ENCODE measurements at regions of chr20 and their contacts with region 1.

Region 1: DNA sequence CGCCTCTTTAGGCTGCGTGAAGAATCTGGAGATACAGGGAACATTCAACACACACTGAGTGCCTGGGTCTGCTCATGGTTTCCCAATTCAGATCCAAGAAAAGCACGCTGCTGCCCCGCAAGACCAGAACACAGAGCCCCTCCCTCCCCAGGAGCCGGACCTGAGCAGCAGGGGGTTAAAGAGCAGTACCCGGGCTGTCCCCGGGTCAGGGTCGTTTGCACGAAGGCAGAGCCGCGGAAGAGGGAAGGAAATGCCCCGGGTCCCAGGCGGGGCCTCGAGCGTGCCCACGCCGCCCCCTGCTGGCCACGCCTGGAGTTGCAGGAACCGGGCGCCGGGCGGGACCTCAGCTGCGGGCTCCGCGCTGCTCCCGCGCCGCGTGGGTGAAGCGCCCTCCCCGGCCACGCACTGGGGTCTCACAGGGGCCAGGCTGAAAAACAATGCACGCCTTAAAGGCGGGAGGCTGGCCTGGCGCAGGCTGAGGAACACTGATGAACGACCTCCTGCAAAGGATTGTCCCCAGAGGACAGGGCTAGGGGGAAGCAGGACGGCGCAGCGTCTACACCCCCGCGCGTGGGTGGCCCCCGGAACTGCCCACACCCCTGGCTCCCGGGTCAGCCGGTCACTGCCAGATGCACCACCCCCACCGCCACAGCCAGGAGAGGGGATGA is 48.9 kb downstream of the ANKRD60 start:
- DNase-seq: peak; percentile 39 to 82 (median 60)
- ATAC-seq: peak; percentile 12 to 82 (median 70)
- H3K4me3 ChIP-seq: peak overlapping the region in 9 of 12 donors; percentile 13 to 49 (median 27)
- H3K27ac ChIP-seq: peak overlapping the region in 1 of 12 donors; percentile 7
- H3K4me1 ChIP-seq: peaks cover 0 to 22% (median 11%) of the 10 kb centered on the region in 12 donors
- H3K27me3 ChIP-seq: peaks cover 0 to 16% (median 2%) of the 10 kb centered on the region in 9 donors
- CTCF ChIP-seq: peak; percentile 97 to 100 (median 99)
- POLR2A ChIP-seq: no peak

Region 2: DNA sequence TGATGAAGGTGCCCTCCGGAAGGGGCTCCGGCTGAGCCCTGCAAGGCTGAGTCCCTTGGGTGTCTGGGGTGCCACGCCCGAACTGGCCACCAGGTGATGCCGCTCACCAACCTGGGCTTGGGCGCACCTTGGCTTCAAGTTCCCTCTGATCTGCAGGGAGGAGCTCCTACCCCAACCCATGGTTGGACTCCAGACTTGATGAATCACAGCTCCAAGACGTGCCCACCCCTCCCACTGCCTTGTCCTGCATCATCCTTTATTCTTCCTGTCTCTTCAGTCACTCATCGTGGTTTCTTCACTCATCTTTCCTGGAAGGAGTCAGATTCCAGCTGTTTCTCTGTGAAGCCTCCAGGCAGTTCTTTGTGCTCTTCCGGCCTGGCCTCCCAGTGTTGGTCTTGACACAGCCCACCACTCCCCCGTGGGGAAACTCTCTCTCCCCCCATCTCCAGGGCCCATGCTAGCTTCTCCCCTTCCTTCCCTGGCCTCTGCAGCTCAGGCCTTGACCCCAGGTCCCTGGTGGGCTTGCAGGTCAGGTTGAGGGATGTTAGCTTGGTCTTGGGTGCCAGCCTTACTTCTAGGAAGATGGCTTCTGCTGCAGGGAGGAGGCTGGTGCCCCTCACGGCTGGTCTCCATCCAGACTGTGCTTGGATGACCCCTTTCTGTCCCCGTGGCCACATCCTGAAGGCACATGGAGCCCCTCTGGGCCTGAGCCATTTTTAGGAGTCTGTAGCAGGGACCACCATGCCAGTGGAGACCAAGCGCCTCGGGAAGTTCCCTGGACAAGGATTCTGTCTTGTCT is 556.8 kb before region 1 on chr20:
- intact Hi-C with region 1: loop called in 1 of 10 experiments (anchors 10 kb)
- DNase-seq: peak in 1 of 5 donors; percentile 43
- ATAC-seq: peak in 2 of 4 donors; percentile 69 to 74
- H3K4me3 ChIP-seq: no peak overlapping the region
- H3K27ac ChIP-seq: no peak overlapping the region
- H3K4me1 ChIP-seq: peaks cover 0 to 50% (median 7%) of the 10 kb centered on the region in 12 donors
- H3K27me3 ChIP-seq: peaks cover 0 to 15% (median 0%) of the 10 kb centered on the region in 9 donors
- CTCF ChIP-seq: peak; percentile 42 to 67 (median 61)
- POLR2A ChIP-seq: no peak

Region 3: GRCh38 chr20:57748601-57749130 is 430.9 kb before region 1 on chr20:
- intact Hi-C with region 1: loop called in 1 of 10 experiments (anchors 10 kb)
- DNase-seq: peak; percentile 86 to 93 (median 88)
- ATAC-seq: peak; percentile 82 to 92 (median 88)
- H3K4me3 ChIP-seq: peak overlapping the region in 10 of 12 donors; percentile 6 to 49 (median 42)
- H3K27ac ChIP-seq: peak overlapping the region; percentile 1 to 92 (median 84)
- H3K4me1 ChIP-seq: peaks cover 9 to 34% (median 29%) of the 10 kb centered on the region in 12 donors
- H3K27me3 ChIP-seq: no peaks in the 10 kb centered on the region
- CTCF ChIP-seq: peak in 1 of 12 donors; percentile 30
- POLR2A ChIP-seq: no peak

Region 4: GRCh38 chr20:57856658-57857057 is 322.9 kb before region 1 on chr20:
- intact Hi-C with region 1: loop called in 1 of 10 experiments (anchors 10 kb)
- DNase-seq: no peak
- ATAC-seq: no peak
- H3K4me3 ChIP-seq: no peak overlapping the region
- H3K27ac ChIP-seq: no peak overlapping the region
- H3K4me1 ChIP-seq: peaks cover 0 to 6% (median 0%) of the 10 kb centered on the region in 12 donors
- H3K27me3 ChIP-seq: no peaks in the 10 kb centered on the region
- CTCF ChIP-seq: no peak
- POLR2A ChIP-seq: no peak

Region 5: GRCh38 chr20:57947421-57948179 is 232.0 kb before region 1 on chr20:
- intact Hi-C with region 1: loop called in 1 of 10 experiments (anchors 10 kb)
- DNase-seq: peak in 3 of 5 donors; percentile 46 to 66 (median 46)
- ATAC-seq: peak; percentile 43 to 69 (median 60)
- H3K4me3 ChIP-seq: no peak overlapping the region
- H3K27ac ChIP-seq: peak overlapping the region in 5 of 12 donors; percentile 27 to 42 (median 41)
- H3K4me1 ChIP-seq: peaks cover 0 to 12% (median 0%) of the 10 kb centered on the region in 12 donors
- H3K27me3 ChIP-seq: peaks cover 0 to under 1% (median 0%) of the 10 kb centered on the region in 9 donors
- CTCF ChIP-seq: peak in 1 of 12 donors; percentile 6
- POLR2A ChIP-seq: no peak

Region 6: DNA sequence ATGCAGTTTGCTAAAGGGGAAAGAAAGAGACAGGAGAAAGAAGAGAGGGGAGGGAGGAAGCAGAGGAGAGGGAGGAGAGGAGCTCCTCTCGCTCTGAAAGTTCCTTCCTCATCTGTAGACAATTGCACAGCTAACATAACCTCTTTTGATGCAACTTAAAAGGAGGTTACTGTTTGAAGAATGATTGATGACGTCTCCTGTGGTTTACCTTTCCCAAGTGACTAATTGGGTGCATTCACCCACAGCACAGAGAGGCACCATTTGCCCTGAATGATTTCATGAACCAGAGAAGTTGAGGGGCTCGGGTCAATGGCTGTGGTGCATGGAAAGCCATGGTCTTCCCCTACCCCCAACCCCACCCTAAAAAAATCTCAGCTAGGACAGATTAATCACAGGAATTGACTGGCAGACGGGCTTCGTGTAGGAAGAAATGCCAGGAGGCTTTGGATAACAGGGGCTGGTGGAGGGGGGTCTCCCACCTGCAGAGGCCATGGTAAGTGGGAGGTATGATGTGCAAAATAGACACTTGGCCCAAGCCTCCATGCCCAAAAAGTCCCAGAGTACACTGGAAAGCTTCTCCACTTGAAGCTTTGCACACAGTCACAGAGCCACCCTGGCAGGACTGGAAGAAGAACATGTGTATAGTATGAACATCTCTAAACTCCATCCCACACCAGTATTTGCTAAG is 164.8 kb before region 1 on chr20:
- intact Hi-C with region 1: no loop called
- DNase-seq: peak in 1 of 5 donors; percentile 1
- ATAC-seq: no peak
- H3K4me3 ChIP-seq: no peak overlapping the region
- H3K27ac ChIP-seq: no peak overlapping the region
- H3K4me1 ChIP-seq: peaks cover 0 to 7% (median under 1%) of the 10 kb centered on the region in 12 donors
- H3K27me3 ChIP-seq: no peaks in the 10 kb centered on the region
- CTCF ChIP-seq: no peak
- POLR2A ChIP-seq: no peak

Region 7: GRCh38 chr20:58094160-58094559 is 85.4 kb before region 1 on chr20:
- intact Hi-C with region 1: loop called in 2 of 10 experiments (anchors 5 kb)
- DNase-seq: no peak
- ATAC-seq: no peak
- H3K4me3 ChIP-seq: no peak overlapping the region
- H3K27ac ChIP-seq: no peak overlapping the region
- H3K4me1 ChIP-seq: no peaks in the 10 kb centered on the region
- H3K27me3 ChIP-seq: peaks cover 0 to 12% (median 0%) of the 10 kb centered on the region in 9 donors
- CTCF ChIP-seq: no peak
- POLR2A ChIP-seq: no peak

Region 8: GRCh38 chr20:58236612-58237330 is 57.2 kb after region 1 on chr20:
- intact Hi-C with region 1: no loop called
- DNase-seq: peak; percentile 53 to 83 (median 71)
- ATAC-seq: peak; percentile 82 to 93 (median 92)
- H3K4me3 ChIP-seq: peak overlapping the region in 11 of 12 donors; percentile 16 to 59 (median 50)
- H3K27ac ChIP-seq: peak overlapping the region in 1 of 12 donors; percentile 18
- H3K4me1 ChIP-seq: peaks cover 0 to 11% (median 0%) of the 10 kb centered on the region in 12 donors
- H3K27me3 ChIP-seq: no peaks in the 10 kb centered on the region
- CTCF ChIP-seq: peak; percentile 94 to 98 (median 96)
- POLR2A ChIP-seq: no peak

Region 9: GRCh38 chr20:58515233-58516184 is 335.9 kb after region 1 on chr20 and contains the start of gene APCDD1L:
- intact Hi-C with region 1: no loop called
- DNase-seq: no peak
- ATAC-seq: peak in 2 of 4 donors; percentile 53 to 76
- H3K4me3 ChIP-seq: peak within 1 kb of the TSS in 11 of 12 donors; percentile 2 to 54 (median 37)
- H3K27ac ChIP-seq: no peak within 1 kb of the TSS
- H3K4me1 ChIP-seq: peaks cover 0 to 10% (median 0%) of the 10 kb centered on the region in 12 donors
- H3K27me3 ChIP-seq: peaks cover 12 to 46% (median 33%) of the 10 kb centered on the region in 9 donors
- CTCF ChIP-seq: no peak
- POLR2A ChIP-seq: no peak
- total RNA-seq, gene APCDD1L: 0.24 to 1.1 (median 0.64) TPM in 8 of 9 donors, not detected in the other

Measured in heart left ventricle (tissue), 16 donors.